ENCODE measurements at regions of chr2 and their contacts with region 1.

Region 1: GRCh38 chr2:121649596-121650314 is 493 bp upstream of the CLASP1 start:
- DNase-seq: peak; percentile 98
- H3K4me3 Mint-ChIP-seq: peak overlapping the region; percentile 97
- H3K27ac Mint-ChIP-seq: peak overlapping the region; percentile 99
- H3K4me1 Mint-ChIP-seq: peaks cover 58% of the 10 kb centered on the region
- H3K27me3 Mint-ChIP-seq: no peaks in the 10 kb centered on the region

Region 2: GRCh38 chr2:121596221-121597080 is 53.3 kb before region 1 on chr2:
- CTCF ChIA-PET with region 1: no interaction called
- POLR2A ChIA-PET with region 1: interaction called, 3 read pairs
- intact Hi-C with region 1: loop called (anchors 1 kb)
- DNase-seq: peak; percentile 22
- H3K4me3 Mint-ChIP-seq: peak overlapping the region; percentile 48
- H3K27ac Mint-ChIP-seq: peak overlapping the region; percentile 70
- H3K4me1 Mint-ChIP-seq: peaks cover 43% of the 10 kb centered on the region
- H3K27me3 Mint-ChIP-seq: no peaks in the 10 kb centered on the region

Region 3: GRCh38 chr2:121699421-121700333 is 49.9 kb after region 1 on chr2:
- CTCF ChIA-PET with region 1: interaction called, 7 read pairs
- POLR2A ChIA-PET with region 1: interaction called, 48 read pairs
- intact Hi-C with region 1: loop called (anchors 1 kb)
- DNase-seq: peak; percentile 96
- H3K4me3 Mint-ChIP-seq: peak overlapping the region; percentile 74
- H3K27ac Mint-ChIP-seq: peak overlapping the region; percentile 95
- H3K4me1 Mint-ChIP-seq: peaks cover 45% of the 10 kb centered on the region
- H3K27me3 Mint-ChIP-seq: no peaks in the 10 kb centered on the region

Region 4: DNA sequence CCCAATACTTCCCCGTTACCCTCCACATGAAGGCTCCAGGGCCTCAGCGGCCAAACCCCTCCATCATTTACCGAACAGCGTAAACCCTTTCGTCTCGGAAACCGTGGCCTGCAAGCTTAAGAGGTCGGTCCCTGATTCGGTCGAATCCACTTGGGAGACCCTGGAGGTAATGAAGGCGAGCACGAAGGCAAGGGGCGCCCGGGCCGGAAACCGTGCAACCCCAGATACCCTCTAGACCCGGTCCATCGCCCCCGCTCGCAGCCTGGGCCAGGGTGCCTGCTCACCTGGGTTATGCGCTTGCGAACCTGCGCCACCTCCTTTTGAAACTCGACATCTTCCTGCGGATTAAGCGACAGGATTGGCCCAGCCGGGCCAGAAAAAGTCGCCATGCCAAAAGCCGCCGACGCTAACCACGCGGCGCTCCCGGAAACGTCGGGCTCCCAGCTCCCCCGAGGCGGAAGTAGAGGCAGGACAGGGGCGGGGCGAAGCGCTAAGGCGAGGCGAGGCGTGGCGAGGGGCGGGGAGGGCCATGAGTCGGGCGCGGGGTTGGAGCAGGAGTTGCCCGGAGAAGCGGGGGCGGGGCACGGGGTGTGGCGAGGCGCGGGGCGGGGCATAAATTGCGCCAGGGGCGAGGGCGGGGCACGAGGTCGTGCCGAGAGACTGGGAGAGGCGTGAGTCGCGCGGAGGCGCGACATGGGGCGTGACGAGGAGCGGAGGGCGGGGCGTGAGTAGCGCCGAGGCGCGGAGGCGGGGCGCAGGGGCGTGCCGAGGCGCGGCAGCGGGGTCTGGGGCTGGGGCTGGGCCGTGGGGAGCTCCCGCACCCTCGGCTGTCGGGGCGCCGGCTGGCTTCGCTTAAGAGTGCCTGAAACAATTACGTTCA is 86.9 kb after region 1 on chr2 and contains the start of gene NIFK:
- CTCF ChIA-PET with region 1: no interaction called
- POLR2A ChIA-PET with region 1: interaction called, 24 read pairs
- intact Hi-C with region 1: loop called (anchors 1 kb)
- DNase-seq: peak; percentile 100
- H3K4me3 Mint-ChIP-seq: peak within 1 kb of the TSS; percentile 98
- H3K27ac Mint-ChIP-seq: peak within 1 kb of the TSS; percentile 89
- H3K4me1 Mint-ChIP-seq: peaks cover 32% of the 10 kb centered on the region
- H3K27me3 Mint-ChIP-seq: no peaks in the 10 kb centered on the region
- total RNA-seq, gene NIFK: 244 to 252 TPM

Region 5: DNA sequence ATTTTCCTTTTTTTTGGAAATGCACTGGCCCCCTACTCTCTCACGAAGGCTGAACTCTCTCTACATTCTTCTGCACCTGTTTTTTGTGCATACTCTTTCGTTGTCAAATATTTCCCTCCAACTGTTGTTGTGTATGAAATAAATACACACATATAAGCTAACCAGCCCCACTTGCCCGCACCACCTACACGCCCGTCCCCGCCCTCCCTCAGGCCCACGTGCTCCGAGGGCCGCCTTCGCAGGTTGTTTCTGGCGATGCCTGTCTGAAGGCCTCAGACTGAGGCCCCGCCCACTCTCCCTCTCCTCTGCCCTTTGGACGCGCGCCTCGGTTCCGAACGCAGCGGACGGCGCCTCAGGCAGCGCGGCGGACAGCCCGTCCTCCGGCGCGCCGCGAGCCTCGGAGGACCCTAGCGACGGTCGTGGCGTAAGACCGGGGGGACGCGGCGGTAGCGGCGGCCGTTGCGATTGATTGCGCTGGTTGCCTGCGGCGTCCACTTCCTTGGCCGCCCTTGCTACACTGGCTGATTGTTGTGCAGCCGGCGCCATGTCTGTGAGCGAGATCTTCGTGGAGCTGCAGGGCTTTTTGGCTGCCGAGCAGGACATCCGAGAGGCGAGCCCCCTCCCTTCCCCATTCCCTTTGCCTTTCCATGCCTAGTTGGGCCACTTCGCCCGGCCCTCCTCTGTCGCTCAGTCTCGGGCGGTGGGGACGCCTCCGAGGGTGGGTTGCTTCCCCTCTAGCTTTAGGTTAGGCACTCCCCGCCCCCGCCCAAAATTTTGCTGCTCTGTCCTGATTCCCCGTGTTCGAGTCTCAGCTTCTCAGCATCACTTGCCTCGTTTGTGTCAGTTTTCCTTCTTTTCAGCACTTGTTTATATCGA is 105.7 kb after region 1 on chr2 and contains the start of gene TSN:
- CTCF ChIA-PET with region 1: interaction called, 3 read pairs
- POLR2A ChIA-PET with region 1: no interaction called
- intact Hi-C with region 1: loop called (anchors 1 kb)
- DNase-seq: peak; percentile 98
- H3K4me3 Mint-ChIP-seq: peak within 1 kb of the TSS; percentile 97
- H3K27ac Mint-ChIP-seq: peak within 1 kb of the TSS; percentile 80
- H3K4me1 Mint-ChIP-seq: peaks cover 27% of the 10 kb centered on the region
- H3K27me3 Mint-ChIP-seq: no peaks in the 10 kb centered on the region
- total RNA-seq, gene TSN: 68.8 to 74.5 TPM

Measured in activated CD4-positive, alpha-beta memory T cell treated with anti-CD3 and anti-CD28 coated beads for 36 hours (primary cell).